ENCODE measurements at regions of chr11 and their contacts with region 1.

Region 1: GRCh38 chr11:1970956-1971355 is 23.8 kb downstream of the MRPL23 start:
- DNase-seq: no peak
- H3K4me3 ChIP-seq: no peak overlapping the region
- CTCF ChIP-seq: no peak

Region 2: DNA sequence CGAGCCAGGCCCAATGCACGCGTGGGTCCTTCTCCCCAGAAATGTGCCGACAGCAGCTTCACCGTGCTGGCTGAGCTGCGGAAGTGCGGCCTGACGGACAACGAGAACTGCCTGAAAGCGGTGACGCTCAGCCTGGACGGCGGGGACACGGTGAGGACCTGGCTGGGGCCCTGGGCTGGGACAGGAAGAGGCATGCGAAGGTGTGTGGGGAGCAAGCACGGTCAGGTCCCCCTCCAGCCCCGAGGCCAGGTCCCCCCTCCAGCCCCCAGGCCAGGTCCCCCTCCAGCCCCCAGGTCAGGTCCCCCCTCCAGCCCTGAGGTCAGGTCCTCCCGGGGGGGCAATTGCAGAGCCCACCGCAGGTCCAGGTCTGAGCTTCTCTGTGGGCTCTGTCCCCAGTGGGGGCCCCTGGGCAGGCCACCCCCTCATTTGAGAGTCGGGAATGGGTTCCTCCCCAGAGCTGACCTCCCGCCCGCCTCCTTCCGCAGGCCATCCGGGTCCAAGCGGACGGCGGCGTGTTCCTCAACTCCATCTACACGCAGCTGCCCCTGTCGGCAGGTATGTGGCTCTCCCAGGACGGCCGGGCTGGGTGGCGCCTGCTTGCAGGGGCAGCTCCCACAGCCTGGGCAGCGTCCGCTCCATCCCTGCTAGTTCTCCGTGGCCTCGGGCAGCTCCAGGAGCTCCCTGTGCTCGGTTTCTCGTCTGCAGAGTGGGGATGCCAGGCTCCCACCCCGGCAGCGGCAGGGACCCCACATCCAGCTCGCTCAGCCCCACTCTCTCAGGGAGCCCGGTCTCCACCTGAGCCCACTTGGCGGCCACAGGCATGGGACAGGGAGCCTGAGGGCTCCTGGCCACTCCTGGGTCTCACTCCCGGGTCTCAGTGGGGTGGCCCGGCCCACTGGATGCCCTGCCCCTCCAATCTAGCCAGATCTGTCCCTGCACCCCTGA is 740.2 kb before region 1 on chr11:
- CTCF ChIA-PET with region 1: no interaction called
- POLR2A ChIA-PET with region 1: no interaction called
- DNase-seq: no peak
- H3K4me3 ChIP-seq: no peak overlapping the region
- CTCF ChIP-seq: no peak

Region 3: GRCh38 chr11:1939006-1939625 is 31.8 kb before region 1 on chr11:
- CTCF ChIA-PET with region 1: no interaction called
- POLR2A ChIA-PET with region 1: no interaction called
- DNase-seq: no peak
- H3K4me3 ChIP-seq: no peak overlapping the region
- CTCF ChIP-seq: no peak

Region 4: DNA sequence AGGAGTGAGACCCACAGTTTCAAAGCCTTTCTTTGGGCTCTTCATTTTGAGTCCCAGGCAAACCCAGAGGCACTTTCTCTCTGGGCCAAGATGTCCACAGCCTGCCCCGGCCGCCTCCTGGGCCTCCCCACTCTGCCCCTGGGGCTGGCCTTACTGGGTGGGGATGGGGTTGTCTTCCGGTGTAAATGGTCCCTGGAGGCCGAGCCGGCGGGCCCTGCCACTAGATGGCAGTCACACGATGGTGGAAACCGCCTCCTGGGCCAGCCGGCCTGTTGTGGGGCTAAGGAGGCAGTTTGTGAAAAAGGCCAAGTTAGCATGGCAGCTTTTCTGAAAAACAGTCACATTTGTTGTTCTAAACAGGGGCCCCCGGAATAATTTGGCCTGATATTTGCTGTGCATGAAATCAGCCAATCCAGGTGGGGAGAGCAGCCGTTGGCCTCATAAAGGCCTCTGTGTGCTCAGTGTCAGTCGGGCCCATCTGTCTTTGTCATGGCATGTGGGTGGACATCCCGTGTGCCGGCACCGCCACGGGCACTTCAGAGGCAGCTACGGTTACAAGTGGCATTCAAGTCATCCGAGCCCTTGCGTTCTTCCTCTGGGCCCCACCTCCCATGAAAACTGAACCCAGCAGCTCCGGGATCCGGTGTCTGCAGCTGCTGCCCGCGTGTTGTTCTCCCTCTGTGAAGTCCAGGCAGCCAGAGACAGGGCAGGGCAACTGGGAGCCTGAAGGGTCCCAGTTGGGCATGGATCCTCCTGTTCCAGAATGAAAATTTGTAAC is 17.3 kb before region 1 on chr11:
- CTCF ChIA-PET with region 1: interaction called, 91 read pairs
- POLR2A ChIA-PET with region 1: no interaction called
- DNase-seq: no peak
- H3K4me3 ChIP-seq: no peak overlapping the region
- CTCF ChIP-seq: no peak

Region 5: GRCh38 chr11:2234963-2235362 is 264.0 kb after region 1 on chr11:
- CTCF ChIA-PET with region 1: no interaction called
- POLR2A ChIA-PET with region 1: no interaction called
- DNase-seq: no peak
- H3K4me3 ChIP-seq: no peak overlapping the region
- CTCF ChIP-seq: no peak

Measured in AG04449 (cell line).